T-cell (primary cell): ENCODE measurements at regions of chr19 and their contacts with region 1.

Region 1: DNA sequence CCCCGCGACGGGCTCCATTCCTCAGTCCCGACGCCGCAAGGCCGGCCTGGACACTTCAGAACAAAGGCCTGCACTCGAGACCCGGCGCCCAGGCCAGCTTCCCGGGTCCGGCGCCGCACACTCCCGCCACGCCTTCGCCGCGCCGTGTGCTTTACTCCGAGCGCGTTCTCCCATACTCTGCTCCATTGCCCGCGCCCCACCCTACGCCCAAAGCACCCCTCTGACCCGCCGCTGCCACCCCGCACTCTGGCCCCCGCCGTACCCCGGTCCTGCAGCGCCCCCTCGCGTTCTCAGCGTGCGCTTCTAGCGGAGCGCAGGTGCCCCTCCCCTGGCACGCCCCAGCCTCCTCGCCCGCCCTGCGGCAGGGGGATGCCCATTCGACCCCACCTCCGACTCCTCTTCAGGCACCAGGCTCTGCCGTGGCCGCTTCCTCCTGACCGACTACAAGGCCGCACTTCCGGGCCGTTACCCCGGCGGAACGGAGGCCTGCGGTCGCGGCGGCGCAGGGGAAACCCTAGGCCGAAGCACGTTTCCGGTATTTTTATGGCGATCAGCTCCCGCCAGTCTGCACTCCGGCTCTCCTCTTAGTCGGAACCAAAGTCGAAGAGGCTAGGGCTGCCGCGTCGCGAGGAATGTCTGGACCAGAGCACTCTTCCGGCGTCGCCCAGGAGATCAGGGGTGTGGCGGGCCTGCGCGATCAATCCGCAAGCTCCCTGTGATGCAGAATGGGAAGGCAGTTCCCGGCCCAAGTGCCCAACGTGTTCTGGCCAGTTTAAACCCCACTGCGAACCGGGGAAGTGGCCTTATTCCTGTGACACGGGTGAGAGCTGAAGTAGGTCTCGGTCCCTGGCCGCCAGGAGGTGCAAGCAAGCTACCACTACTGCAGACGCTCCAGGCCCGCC is at the start of gene ZBTB45:
- DNase-seq: peak; percentile 70 to 93 (median 80)
- ATAC-seq: peak; percentile 83 to 86 (median 85)
- H3K4me3 ChIP-seq: peak within 1 kb of the TSS; percentile 82 to 88
- H3K4me3 Mint-ChIP-seq: peak within 1 kb of the TSS; percentile 93 to 94 (median 94)
- H3K27ac ChIP-seq: peak within 1 kb of the TSS; percentile 92
- H3K27ac Mint-ChIP-seq: peak within 1 kb of the TSS; percentile 97 to 98
- H3K4me1 ChIP-seq: peaks cover 12 to 45% of the 10 kb centered on the region in 2 experiments
- H3K4me1 Mint-ChIP-seq: peaks cover 35 to 48% (median 43%) of the 10 kb centered on the region in 3 donors
- H3K27me3 ChIP-seq: no peaks in the 10 kb centered on the region
- H3K27me3 Mint-ChIP-seq: no peaks in the 10 kb centered on the region
- total RNA-seq, gene ZBTB45: 8.3 to 27.8 (median 24.5) TPM

Region 2: GRCh38 chr19:58485635-58486034 is 34.0 kb before region 1 on chr19:
- CTCF ChIA-PET with region 1: no interaction called
- POLR2A ChIA-PET with region 1: no interaction called
- DNase-seq: no peak
- ATAC-seq: no peak
- H3K4me3 ChIP-seq: no peak overlapping the region
- H3K4me3 Mint-ChIP-seq: no peak overlapping the region
- H3K27ac ChIP-seq: no peak overlapping the region
- H3K27ac Mint-ChIP-seq: no peak overlapping the region
- H3K4me1 ChIP-seq: peaks cover 0 to 3% of the 10 kb centered on the region in 2 experiments
- H3K4me1 Mint-ChIP-seq: peaks cover 0 to 2% (median 2%) of the 10 kb centered on the region in 3 donors
- H3K27me3 ChIP-seq: no peaks in the 10 kb centered on the region
- H3K27me3 Mint-ChIP-seq: no peaks in the 10 kb centered on the region

Region 3: GRCh38 chr19:58543826-58544590 is 24.4 kb after region 1 on chr19 and contains the start of gene TRIM28:
- CTCF ChIA-PET with region 1: interaction called in 1 of 2 experiments, 13 read pairs
- POLR2A ChIA-PET with region 1: interaction called in 1 of 2 experiments, 3 read pairs
- DNase-seq: peak; percentile 99 to 100 (median 100)
- ATAC-seq: peak; percentile 85 to 89 (median 86)
- H3K4me3 ChIP-seq: peak within 1 kb of the TSS; percentile 70 to 89
- H3K4me3 Mint-ChIP-seq: peak within 1 kb of the TSS; percentile 90 to 95 (median 91)
- H3K27ac ChIP-seq: peak within 1 kb of the TSS; percentile 97
- H3K27ac Mint-ChIP-seq: peak within 1 kb of the TSS; percentile 98
- H3K4me1 ChIP-seq: peaks cover 12 to 45% of the 10 kb centered on the region in 2 experiments
- H3K4me1 Mint-ChIP-seq: peaks cover 36 to 44% (median 39%) of the 10 kb centered on the region in 3 donors
- H3K27me3 ChIP-seq: peaks cover 0 to 19% of the 10 kb centered on the region in 2 experiments
- H3K27me3 Mint-ChIP-seq: no peaks in the 10 kb centered on the region
- total RNA-seq, gene TRIM28: 374 to 574 (median 403) TPM

Region 4: GRCh38 chr19:58575183-58576064 is 55.8 kb after region 1 on chr19:
- CTCF ChIA-PET with region 1: interaction called, 5 to 12 read pairs
- POLR2A ChIA-PET with region 1: interaction called in 1 of 2 experiments, 6 read pairs
- DNase-seq: peak; percentile 32 to 87 (median 65)
- ATAC-seq: peak; percentile 33 to 35 (median 34)
- H3K4me3 ChIP-seq: peak overlapping the region; percentile 88 to 97
- H3K4me3 Mint-ChIP-seq: peak overlapping the region; percentile 83 to 97 (median 93)
- H3K27ac ChIP-seq: peak overlapping the region; percentile 98
- H3K27ac Mint-ChIP-seq: peak overlapping the region; percentile 83 to 85
- H3K4me1 ChIP-seq: peaks cover 12 to 46% of the 10 kb centered on the region in 2 experiments
- H3K4me1 Mint-ChIP-seq: peaks cover 40 to 43% (median 41%) of the 10 kb centered on the region in 3 donors
- H3K27me3 ChIP-seq: no peaks in the 10 kb centered on the region
- H3K27me3 Mint-ChIP-seq: no peaks in the 10 kb centered on the region